Mammary epithelial cell (primary cell): ENCODE measurements at regions of chr21 and their contacts with region 1.

Region 1: GRCh38 chr21:45643021-45643980 is at the start of gene PCBP3:
- DNase-seq: peak; percentile 81
- H3K4me3 ChIP-seq: peak within 1 kb of the TSS in 1 of 3 experiments; percentile 43
- H3K27ac ChIP-seq: no peak within 1 kb of the TSS
- H3K4me1 ChIP-seq: peaks cover 3% of the 10 kb centered on the region
- H3K27me3 ChIP-seq: peaks cover 18% of the 10 kb centered on the region
- CTCF ChIP-seq: no peak
- total RNA-seq, gene PCBP3: 0.67 to 1.0 TPM

Region 2: GRCh38 chr21:45698493-45699184 is 55.3 kb after region 1 on chr21:
- CTCF ChIA-PET with region 1: no interaction called
- dilution Hi-C with region 1: no loop called
- in situ Hi-C with region 1: no loop called
- intact Hi-C with region 1: loop called (anchors 2 kb)
- DNase-seq: peak; percentile 89
- H3K4me3 ChIP-seq: no peak overlapping the region
- H3K27ac ChIP-seq: no peak overlapping the region
- H3K4me1 ChIP-seq: peaks cover 13% of the 10 kb centered on the region
- H3K27me3 ChIP-seq: no peaks in the 10 kb centered on the region
- CTCF ChIP-seq: no peak

Region 3: DNA sequence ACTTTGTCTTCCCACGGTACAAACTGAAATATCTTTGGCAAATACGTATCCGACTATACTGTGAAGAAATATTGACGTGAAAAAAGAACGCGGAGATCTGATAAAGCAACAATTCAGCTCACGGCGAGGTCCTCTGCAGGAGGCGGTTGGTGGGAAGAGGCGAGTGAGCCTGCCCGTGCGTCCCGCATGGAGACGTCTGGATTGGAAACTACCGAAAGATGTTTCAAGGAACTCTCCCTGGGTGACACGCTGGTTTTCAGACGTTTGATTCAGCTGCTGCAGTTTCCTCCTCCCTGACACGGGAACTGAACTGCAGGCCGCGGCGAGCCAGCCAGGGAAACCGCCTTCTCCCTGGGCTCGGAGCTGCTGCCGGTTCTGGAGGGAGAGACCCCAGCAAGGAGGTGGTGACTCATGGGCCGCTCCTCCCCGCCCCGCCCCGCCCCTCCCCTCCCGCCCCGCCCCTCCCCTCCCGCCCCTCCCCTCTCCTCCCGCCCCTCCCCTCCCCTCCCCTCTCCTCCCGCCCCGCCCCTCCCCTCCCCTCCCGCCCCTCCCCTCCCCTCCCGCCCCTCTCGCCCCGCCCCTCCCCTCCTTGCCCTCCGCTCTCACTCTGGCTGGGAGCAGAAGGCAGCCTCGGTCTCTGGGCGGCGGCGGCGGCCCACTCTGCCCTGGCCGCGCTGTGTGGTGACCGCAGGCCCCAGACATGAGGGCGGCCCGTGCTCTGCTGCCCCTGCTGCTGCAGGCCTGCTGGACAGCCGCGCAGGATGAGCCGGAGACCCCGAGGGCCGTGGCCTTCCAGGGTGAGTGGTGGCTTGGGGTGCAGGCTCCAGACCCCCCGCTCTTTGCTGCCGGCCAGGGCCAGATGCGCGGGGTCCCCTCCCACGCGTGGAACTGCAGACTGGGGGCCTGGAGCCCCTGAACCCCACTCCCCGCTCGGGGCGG is 338.1 kb after region 1 on chr21 and contains the start of gene COL6A1:
- CTCF ChIA-PET with region 1: no interaction called
- dilution Hi-C with region 1: no loop called
- in situ Hi-C with region 1: no loop called
- intact Hi-C with region 1: loop called (anchors 10 kb)
- DNase-seq: peak; percentile 70
- H3K4me3 ChIP-seq: peak within 1 kb of the TSS; percentile 49 to 62 (median 54)
- H3K27ac ChIP-seq: no peak within 1 kb of the TSS
- H3K4me1 ChIP-seq: peaks cover 10% of the 10 kb centered on the region
- H3K27me3 ChIP-seq: peaks cover 10% of the 10 kb centered on the region
- CTCF ChIP-seq: no peak
- total RNA-seq, gene COL6A1: 9.1 to 156 TPM